ENCODE measurements at regions of chr3 and their contacts with region 1.

Region 1: DNA sequence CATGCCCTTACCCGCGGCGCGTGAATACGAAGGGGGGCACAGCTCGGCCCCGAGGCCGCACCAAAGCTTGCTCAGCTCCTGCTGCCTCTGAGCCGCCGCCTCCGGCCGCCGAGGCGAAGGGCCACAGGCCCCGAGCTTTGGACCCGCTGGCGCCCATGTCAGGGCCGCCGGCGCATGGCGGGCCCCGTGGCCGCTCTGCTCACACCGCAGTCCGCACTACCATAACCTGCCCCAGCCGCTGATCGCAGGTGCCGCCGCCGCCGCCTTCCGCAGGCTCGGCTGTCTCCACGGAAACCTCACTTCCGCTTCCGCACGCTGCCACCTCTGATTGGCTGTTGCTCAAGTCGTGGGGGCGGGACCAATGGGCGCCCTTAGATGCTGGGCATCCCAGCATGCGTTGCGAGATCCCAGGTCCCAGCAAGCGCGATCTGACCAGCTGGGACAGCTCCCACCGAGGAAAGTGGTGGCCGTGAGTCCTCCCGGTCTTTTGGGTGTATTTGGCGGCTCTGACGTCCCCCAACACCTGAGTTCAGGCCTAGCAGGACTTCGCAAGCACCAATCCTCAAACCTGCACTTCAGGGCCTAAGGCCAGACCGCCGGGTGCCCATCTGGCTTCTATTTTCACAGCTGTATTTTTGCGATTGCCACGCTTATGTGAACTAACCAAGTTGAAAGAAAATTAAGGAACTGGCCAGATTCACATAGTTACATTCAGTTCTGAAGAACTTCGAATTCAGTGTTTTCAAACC is at the start of gene TUSC2:
- DNase-seq: peak; percentile 81
- ATAC-seq: peak; percentile 96
- H3K4me3 ChIP-seq: peak within 1 kb of the TSS; percentile 90
- H3K27ac ChIP-seq: peak within 1 kb of the TSS; percentile 69
- H3K4me1 ChIP-seq: peaks cover 3% of the 10 kb centered on the region; the same call in 1 of the 2 replicates
- H3K27me3 ChIP-seq: no peaks in the 10 kb centered on the region
- CTCF ChIP-seq: no peak
- EP300 ChIP-seq: no peak
- POLR2A ChIP-seq: peak; percentile 92
- RAD21 ChIP-seq: no peak
- polyA plus RNA-seq, gene TUSC2: 4.0 to 10.2 TPM

Region 2: GRCh38 chr3:50068134-50068533 is 260.0 kb before region 1 on chr3:
- CTCF ChIA-PET with region 1: no interaction called
- POLR2A ChIA-PET with region 1: no interaction called
- RAD21 ChIA-PET with region 1: no interaction called
- SMC1A ChIA-PET with region 1: no interaction called
- in situ Hi-C with region 1: no loop called
- intact Hi-C with region 1: no loop called
- DNase-seq: no peak
- ATAC-seq: no peak
- H3K4me3 ChIP-seq: no peak overlapping the region
- H3K27ac ChIP-seq: no peak overlapping the region
- H3K4me1 ChIP-seq: no peaks in the 10 kb centered on the region
- H3K27me3 ChIP-seq: no peaks in the 10 kb centered on the region
- CTCF ChIP-seq: no peak
- EP300 ChIP-seq: no peak
- POLR2A ChIP-seq: no peak
- RAD21 ChIP-seq: no peak

Region 3: DNA sequence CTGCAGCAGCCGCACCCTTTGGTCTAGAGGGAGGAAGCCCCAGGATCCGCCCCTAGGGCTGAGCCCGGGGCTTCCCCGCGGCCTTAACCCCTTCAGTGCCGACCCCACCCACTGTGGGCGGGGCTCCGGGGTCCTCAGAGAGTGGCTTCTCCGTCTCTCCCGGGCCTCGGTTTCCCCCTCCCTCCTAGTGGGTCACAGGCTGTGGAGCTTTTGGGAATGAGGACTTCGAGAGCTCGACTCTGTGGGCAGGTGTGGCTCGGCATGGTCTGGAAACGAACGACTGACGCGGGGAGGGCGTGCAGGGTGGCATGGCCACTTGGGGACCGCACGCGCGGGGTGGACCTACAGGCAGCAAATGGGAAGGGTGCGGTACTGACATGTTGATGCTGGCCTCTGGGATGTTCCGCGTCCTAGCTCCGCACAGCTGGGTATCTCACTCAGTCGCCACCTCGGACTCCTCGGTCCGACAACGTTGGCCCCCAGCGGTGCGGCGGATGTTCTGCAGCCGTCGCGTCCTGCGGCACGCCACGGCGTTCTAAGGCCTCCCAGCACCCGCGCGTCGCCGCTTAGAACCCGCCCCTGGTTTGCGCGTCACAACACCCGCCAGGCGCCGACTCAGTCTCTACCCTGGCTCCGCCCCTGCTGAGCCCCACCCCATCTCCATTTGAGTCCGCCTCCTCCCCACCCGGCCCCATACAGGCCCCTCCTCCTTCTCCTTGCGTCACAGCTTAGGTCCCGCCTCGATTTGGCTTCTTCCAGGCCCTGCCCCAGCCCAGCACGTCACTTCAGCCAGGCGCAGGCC is 29.1 kb before region 1 on chr3 and contains the starts of genes HYAL3 and NAA80:
- CTCF ChIA-PET with region 1: interaction called, 22 read pairs
- POLR2A ChIA-PET with region 1: interaction called, 18 read pairs
- RAD21 ChIA-PET with region 1: interaction called, 8 read pairs
- SMC1A ChIA-PET with region 1: interaction called, 4 read pairs
- in situ Hi-C with region 1: no loop called
- intact Hi-C with region 1: no loop called
- DNase-seq: peak; percentile 98
- ATAC-seq: peak; percentile 90
- H3K4me3 ChIP-seq: peak within 1 kb of the TSS; percentile 82
- H3K27ac ChIP-seq: peak within 1 kb of the TSS; percentile 83
- H3K4me1 ChIP-seq: peaks cover 4% of the 10 kb centered on the region
- H3K27me3 ChIP-seq: no peaks in the 10 kb centered on the region
- CTCF ChIP-seq: peak; percentile 24 to 56 (median 50); a peak in 4 of 6 replicates
- EP300 ChIP-seq: no peak
- POLR2A ChIP-seq: peak; percentile 99
- RAD21 ChIP-seq: no peak
- polyA plus RNA-seq, gene HYAL3: 0.37 TPM
- polyA plus RNA-seq, gene NAA80: 0.48 to 0.62 TPM

Measured in GM12878 (cell line).